ENCODE measurements at regions of chr3 and their contacts with region 1.

Region 1: DNA sequence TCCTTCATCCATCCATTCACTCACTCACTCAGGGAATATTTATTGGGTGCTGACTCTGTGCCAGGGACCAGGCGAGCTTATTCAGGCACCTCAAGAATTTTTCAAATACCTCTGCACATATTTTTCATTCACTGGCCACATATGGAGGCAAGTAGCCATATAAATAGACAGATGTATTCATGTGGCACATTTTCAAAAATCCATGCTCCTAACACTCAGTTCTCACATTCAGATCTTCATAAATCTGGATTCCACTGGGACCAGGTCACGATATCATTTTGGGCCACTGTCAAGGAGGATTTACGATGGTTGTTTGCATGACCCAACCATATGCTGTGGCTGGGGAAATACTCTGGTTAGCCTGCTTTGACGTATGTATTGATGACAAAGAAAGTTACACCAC is 241.8 kb upstream of the LRTM1 start:
- DNase-seq: no peak
- H3K4me3 ChIP-seq: no peak overlapping the region
- H3K27ac ChIP-seq: no peak overlapping the region
- H3K4me1 ChIP-seq: peaks cover 0 to 12% of the 10 kb centered on the region in 2 donors
- H3K27me3 ChIP-seq: no peaks in the 10 kb centered on the region
- CTCF ChIP-seq: no peak
- POLR2A ChIP-seq: no peak

Region 2: GRCh38 chr3:54427941-54428871 is 741.4 kb before region 1 on chr3:
- intact Hi-C with region 1: loop called (anchors 10 kb)
- DNase-seq: peak; percentile 68
- H3K4me3 ChIP-seq: no peak overlapping the region
- H3K27ac ChIP-seq: peak overlapping the region in 1 of 3 donors; percentile 41
- H3K4me1 ChIP-seq: peaks cover 3% of the 10 kb centered on the region in 2 donors
- H3K27me3 ChIP-seq: no peaks in the 10 kb centered on the region
- CTCF ChIP-seq: peak; percentile 66 to 86 (median 79)
- POLR2A ChIP-seq: no peak

Region 3: DNA sequence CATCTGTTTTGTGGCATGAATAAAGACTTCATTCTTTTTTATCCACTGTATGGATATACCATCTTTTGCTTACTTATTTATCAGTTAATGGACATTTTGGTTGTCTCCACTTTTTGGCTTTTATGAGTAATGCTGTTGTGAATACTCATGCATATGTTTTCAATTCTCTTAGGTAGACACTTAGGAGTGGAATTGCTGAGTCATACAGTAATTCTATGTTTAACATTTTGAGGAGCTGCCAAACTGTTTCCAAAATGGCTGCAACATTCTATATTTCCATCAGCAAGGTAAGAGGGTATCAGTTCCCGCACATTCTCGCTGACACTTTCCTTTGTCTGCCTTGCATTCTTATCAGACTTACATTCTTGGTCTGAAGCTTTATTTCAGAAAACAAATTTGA is 126.4 kb after region 1 on chr3:
- intact Hi-C with region 1: no loop called
- DNase-seq: no peak
- H3K4me3 ChIP-seq: no peak overlapping the region
- H3K27ac ChIP-seq: no peak overlapping the region
- H3K4me1 ChIP-seq: peaks cover 0 to 6% of the 10 kb centered on the region in 2 donors
- H3K27me3 ChIP-seq: no peaks in the 10 kb centered on the region
- CTCF ChIP-seq: no peak
- POLR2A ChIP-seq: no peak

Region 4: GRCh38 chr3:55434789-55435188 is 265.2 kb after region 1 on chr3:
- intact Hi-C with region 1: no loop called
- DNase-seq: peak in 1 of 2 donors; percentile 38
- H3K4me3 ChIP-seq: no peak overlapping the region
- H3K27ac ChIP-seq: no peak overlapping the region
- H3K4me1 ChIP-seq: no peaks in the 10 kb centered on the region
- H3K27me3 ChIP-seq: no peaks in the 10 kb centered on the region
- CTCF ChIP-seq: peak in 3 of 6 experiments; percentile 34 to 44 (median 44)
- POLR2A ChIP-seq: no peak